Gastrocnemius medialis (tissue), 4 donors: ENCODE measurements at regions of chrX and their contacts with region 1.

Region 1: DNA sequence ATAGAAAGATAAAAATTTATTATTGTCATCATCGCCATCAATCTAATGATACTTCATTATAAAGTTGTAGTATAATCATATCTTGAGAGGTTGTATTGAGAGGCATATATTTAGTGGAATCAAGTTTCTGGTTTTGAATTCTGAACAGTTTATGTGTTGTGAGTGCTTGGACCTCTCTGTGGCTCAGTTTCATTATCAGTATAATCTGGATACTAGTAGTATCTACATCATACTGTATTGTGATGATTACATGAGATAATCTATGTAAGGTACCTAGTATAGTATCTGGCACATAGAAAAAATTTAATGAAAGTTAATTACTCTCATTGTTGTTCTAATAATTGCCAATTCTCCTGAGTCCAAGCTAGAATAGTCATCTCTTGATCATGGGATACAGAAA is 161.2 kb upstream of the UBQLN2 start:
- DNase-seq: no peak
- ATAC-seq: no peak
- H3K4me3 ChIP-seq: no peak overlapping the region
- H3K27ac ChIP-seq: no peak overlapping the region
- H3K4me1 ChIP-seq: no peaks in the 10 kb centered on the region
- H3K27me3 ChIP-seq: peaks cover 0 to 4% (median 0%) of the 10 kb centered on the region in 3 donors
- CTCF ChIP-seq: no peak
- POLR2A ChIP-seq: no peak

Region 2: DNA sequence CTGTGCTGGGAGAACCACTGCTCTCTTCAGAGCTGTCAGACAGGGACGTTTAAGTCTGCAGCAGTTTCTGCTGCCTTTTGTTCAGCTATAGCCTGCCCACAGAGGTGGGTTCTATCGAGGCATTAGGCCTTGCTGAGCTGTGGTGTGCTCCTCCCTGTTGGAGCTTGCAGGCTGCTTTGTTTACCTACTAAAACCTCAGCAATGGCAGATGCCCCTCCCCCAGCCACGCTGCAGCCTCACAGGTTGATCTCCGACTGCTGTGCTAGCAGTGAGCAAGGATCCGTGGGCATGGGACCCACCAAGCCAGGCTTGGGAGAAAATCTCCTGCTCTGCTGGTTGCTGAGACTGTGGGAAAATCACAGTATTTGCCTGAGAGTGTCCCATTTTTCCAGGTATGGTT is 27.4 kb after region 1 on chrX:
- in situ Hi-C with region 1: no loop called
- intact Hi-C with region 1: no loop called
- DNase-seq: no peak
- ATAC-seq: no peak
- H3K4me3 ChIP-seq: no peak overlapping the region
- H3K27ac ChIP-seq: no peak overlapping the region
- H3K4me1 ChIP-seq: no peaks in the 10 kb centered on the region
- H3K27me3 ChIP-seq: no peaks in the 10 kb centered on the region
- CTCF ChIP-seq: no peak
- POLR2A ChIP-seq: no peak

Region 3: DNA sequence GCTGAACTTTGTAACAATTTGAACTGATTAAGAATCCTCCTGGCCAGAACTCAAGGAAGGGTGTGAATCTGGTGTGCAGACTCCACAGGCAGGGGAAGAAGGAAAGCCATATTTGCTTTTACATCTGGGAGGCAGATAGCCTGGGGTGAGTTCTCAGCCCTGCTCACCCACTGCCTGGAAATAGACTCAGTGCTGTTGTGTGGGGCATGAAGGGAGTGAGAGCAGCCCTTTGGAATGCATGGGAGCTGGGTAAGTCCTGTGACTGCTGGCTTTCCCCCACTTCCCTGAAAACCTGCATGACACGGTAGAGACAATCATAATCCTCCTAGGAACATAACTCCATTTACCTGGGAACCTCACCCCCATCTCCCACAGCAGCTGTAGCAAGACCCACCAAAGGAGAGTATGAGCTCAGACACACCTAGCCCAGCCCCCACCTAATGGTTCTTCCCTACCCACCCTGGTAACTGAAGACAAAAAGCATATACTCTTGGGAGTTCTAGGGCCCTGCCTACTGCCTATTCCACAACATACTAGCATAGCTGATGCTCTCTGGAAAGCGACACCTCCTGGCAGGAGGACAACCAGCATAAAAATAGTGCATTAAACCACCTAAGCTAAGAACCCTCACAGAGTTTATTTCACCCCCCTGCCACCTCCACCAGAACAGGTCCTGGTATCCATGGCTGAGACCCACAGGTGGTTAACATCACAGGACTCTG is 101.9 kb after region 1 on chrX:
- in situ Hi-C with region 1: loop called in 1 of 4 experiments (anchors 25 kb)
- intact Hi-C with region 1: no loop called
- DNase-seq: no peak
- ATAC-seq: no peak
- H3K4me3 ChIP-seq: no peak overlapping the region
- H3K27ac ChIP-seq: no peak overlapping the region
- H3K4me1 ChIP-seq: no peaks in the 10 kb centered on the region
- H3K27me3 ChIP-seq: peaks cover 0 to 5% (median 0%) of the 10 kb centered on the region in 3 donors
- CTCF ChIP-seq: no peak
- POLR2A ChIP-seq: no peak

Region 4: GRCh38 chrX:56623316-56623715 is 221.1 kb after region 1 on chrX:
- in situ Hi-C with region 1: no loop called
- intact Hi-C with region 1: no loop called
- DNase-seq: no peak
- ATAC-seq: no peak
- H3K4me3 ChIP-seq: no peak overlapping the region
- H3K27ac ChIP-seq: no peak overlapping the region
- H3K4me1 ChIP-seq: no peaks in the 10 kb centered on the region
- H3K27me3 ChIP-seq: no peaks in the 10 kb centered on the region
- CTCF ChIP-seq: no peak
- POLR2A ChIP-seq: no peak

Region 5: DNA sequence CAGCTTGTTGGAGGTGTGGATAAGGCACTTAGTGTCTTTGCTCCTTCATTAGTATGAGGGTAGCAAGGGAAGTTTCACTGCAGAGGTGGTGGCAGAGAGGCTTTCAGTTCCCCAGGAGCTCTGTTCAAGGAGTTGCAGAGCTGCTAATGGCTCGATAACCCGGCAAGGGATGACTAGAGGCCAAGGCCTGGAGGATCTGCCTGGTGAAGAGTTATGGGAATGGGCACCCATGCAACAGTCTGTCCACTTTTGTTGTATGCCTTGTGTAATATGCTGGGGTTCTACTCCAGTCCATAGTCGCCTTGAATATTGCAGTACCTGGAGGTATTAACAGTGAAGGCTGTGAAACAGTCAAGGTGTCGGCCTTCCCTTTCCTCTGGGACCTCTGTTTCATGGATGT is 259.0 kb after region 1 on chrX:
- in situ Hi-C with region 1: loop called in 1 of 4 experiments (anchors 25 kb)
- intact Hi-C with region 1: no loop called
- DNase-seq: no peak
- ATAC-seq: no peak
- H3K4me3 ChIP-seq: no peak overlapping the region
- H3K27ac ChIP-seq: no peak overlapping the region
- H3K4me1 ChIP-seq: no peaks in the 10 kb centered on the region
- H3K27me3 ChIP-seq: no peaks in the 10 kb centered on the region
- CTCF ChIP-seq: no peak
- POLR2A ChIP-seq: no peak